ENCODE measurements at regions of chr7 and their contacts with region 1.

Region 1: GRCh38 chr7:135274495-135275268 is 41.0 kb downstream of the STRA8 start:
- DNase-seq: peak; percentile 73
- ATAC-seq: peak; percentile 99
- H3K4me3 ChIP-seq: no peak overlapping the region
- H3K27ac ChIP-seq: no peak overlapping the region
- H3K4me1 ChIP-seq: no peaks in the 10 kb centered on the region
- H3K27me3 ChIP-seq: peaks cover 13% of the 10 kb centered on the region
- CTCF ChIP-seq: peak; percentile 79
- POLR2A ChIP-seq: no peak
- RAD21 ChIP-seq: peak; percentile 79

Region 2: DNA sequence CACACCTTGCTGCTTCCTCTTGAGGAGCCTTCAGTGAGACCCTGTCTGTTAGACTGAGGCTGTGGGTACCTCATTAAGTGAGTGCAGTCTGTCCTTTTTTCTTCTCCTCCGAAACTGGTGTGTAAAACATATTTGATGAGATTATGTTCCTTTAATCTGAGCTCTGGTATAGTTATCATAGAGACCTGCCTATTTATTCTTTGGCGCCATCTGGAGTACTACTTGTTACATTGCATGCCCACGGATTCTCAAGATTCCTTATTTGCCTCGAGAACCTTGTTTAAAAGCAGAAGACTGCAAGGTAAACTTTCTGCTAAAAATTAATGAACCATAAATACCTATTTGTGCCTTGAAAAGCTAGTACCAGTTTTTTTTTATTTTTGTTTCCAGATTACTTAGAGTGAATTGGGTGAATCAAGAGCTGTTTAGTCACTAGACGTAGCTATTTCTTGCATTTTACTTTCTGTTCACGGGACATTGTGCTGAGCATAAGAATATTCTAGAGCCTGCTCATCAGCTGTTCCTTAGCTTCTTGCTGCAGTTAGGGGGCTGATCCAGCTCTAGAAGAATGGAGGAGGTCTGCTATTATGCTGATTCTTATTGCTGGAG is 370.7 kb after region 1 on chr7:
- CTCF ChIA-PET with region 1: interaction called, 4 read pairs
- POLR2A ChIA-PET with region 1: no interaction called
- dilution Hi-C with region 1: no loop called
- in situ Hi-C with region 1: loop called (anchors 10 kb)
- intact Hi-C with region 1: no loop called
- DNase-seq: peak; percentile 64
- ATAC-seq: peak; percentile 96
- H3K4me3 ChIP-seq: no peak overlapping the region
- H3K27ac ChIP-seq: no peak overlapping the region
- H3K4me1 ChIP-seq: no peaks in the 10 kb centered on the region
- H3K27me3 ChIP-seq: no peaks in the 10 kb centered on the region
- CTCF ChIP-seq: peak; percentile 79
- POLR2A ChIP-seq: no peak
- RAD21 ChIP-seq: peak; percentile 69

Region 3: DNA sequence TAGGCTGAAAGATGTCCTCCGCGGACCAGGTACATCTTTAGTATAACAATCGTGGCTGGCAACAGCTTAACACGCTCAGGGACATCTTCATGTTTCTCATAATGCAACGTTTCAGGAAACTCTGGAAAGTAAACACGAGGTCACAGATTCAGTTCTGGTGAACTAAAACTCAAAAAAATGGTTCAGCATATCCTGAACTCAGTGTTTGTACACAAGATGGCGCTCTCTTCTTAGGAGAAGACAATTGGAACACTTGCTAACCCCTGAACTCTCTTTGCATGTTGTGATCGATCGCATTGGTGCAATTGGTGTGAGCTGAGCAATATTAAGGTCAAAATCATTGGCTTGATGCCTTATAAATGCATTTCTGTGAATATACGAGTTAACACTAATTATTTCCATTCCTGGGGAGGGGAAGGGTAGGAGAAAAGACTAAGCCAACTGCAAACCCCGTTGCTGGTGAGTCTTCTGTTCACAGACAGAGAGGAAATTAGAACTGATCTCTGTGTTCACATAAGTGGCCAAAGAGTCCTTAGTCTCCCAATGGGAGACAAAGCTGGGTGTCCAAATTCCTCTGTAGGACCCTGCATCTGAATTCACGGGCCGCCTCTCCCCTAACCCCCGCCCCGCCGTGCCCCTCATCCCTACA is 526.5 kb after region 1 on chr7:
- CTCF ChIA-PET with region 1: no interaction called
- POLR2A ChIA-PET with region 1: no interaction called
- dilution Hi-C with region 1: no loop called
- in situ Hi-C with region 1: no loop called
- intact Hi-C with region 1: loop called (anchors 5 kb)
- DNase-seq: peak; percentile 74
- ATAC-seq: peak; percentile 81
- H3K4me3 ChIP-seq: no peak overlapping the region
- H3K27ac ChIP-seq: no peak overlapping the region
- H3K4me1 ChIP-seq: peaks cover 2% of the 10 kb centered on the region; the same call in 1 of the 2 replicates
- H3K27me3 ChIP-seq: no peaks in the 10 kb centered on the region
- CTCF ChIP-seq: peak; percentile 90
- POLR2A ChIP-seq: no peak
- RAD21 ChIP-seq: peak; percentile 97